CD4-positive, alpha-beta T cell (primary cell): ENCODE measurements at regions of chr1 and their contacts with region 1.

Region 1: GRCh38 chr1:234963180-234963903 is 165.3 kb downstream of the TOMM20 start:
- DNase-seq: peak; percentile 59 to 97 (median 78)
- ATAC-seq: peak; percentile 79
- H3K4me3 ChIP-seq: peak overlapping the region; percentile 25
- H3K4me3 Mint-ChIP-seq: peak overlapping the region; percentile 78
- H3K27ac ChIP-seq: peak overlapping the region; percentile 71 to 81
- H3K27ac Mint-ChIP-seq: peak overlapping the region; percentile 90
- H3K4me1 ChIP-seq: peaks cover 63% of the 10 kb centered on the region
- H3K4me1 Mint-ChIP-seq: peaks cover 66% of the 10 kb centered on the region
- H3K27me3 ChIP-seq: no peaks in the 10 kb centered on the region
- H3K27me3 Mint-ChIP-seq: no peaks in the 10 kb centered on the region
- CTCF ChIP-seq: no peak

Region 2: DNA sequence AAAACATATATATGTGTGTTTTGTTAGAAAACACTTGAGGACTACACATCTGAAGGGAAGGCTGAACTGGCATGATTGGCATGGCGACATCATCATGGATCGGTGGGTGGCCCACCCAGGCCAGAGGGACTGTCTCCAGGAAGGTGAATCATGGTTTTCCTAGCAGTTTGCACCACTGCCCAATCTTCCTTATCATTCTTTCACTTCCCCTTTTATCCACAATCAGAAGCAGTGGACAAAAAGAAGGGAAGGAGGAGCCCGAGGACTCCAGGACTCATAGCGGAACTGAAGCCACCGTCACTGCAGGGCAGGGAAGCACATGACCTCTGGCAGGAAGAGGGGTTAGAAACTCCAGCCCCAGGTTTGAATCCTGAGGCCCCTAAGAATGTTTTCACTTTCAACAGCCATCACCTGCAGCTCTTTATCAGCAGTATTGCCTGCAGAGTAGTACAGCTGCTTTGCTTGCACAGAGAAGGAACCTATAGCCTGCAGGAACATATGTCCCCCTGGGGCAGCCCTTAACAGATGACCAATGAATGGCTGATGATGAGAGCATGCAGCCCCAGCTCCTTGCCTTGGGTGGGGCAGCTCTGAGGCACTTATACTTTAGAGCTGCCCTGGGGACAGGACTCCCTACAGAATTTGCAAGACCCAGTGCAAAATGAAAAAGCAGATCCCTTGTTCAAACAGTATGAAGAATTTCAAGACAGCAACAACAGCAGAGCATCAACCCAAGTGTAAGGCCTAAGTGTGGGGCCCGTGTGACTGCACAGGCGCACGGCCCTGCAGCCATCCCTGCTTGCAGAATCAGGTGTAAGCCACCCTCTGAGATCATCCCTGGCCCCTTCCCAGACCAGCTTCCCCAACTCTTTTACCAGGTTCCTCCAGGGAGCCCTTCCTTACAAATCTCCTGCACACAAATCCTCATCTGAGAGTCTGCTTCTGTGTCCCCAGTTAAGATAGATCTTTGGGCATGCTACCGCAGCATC is 111.6 kb before region 1 on chr1:
- CTCF ChIA-PET with region 1: no interaction called
- POLR2A ChIA-PET with region 1: no interaction called
- intact Hi-C with region 1: loop called in 1 of 2 experiments (anchors 5 kb)
- DNase-seq: peak in 3 of 14 experiments; percentile 15 to 58 (median 56)
- ATAC-seq: no peak
- H3K4me3 ChIP-seq: no peak overlapping the region
- H3K4me3 Mint-ChIP-seq: no peak overlapping the region
- H3K27ac ChIP-seq: no peak overlapping the region
- H3K27ac Mint-ChIP-seq: no peak overlapping the region
- H3K4me1 ChIP-seq: peaks cover 24% of the 10 kb centered on the region
- H3K4me1 Mint-ChIP-seq: peaks cover 33% of the 10 kb centered on the region
- H3K27me3 ChIP-seq: no peaks in the 10 kb centered on the region
- H3K27me3 Mint-ChIP-seq: no peaks in the 10 kb centered on the region
- CTCF ChIP-seq: no peak

Region 3: DNA sequence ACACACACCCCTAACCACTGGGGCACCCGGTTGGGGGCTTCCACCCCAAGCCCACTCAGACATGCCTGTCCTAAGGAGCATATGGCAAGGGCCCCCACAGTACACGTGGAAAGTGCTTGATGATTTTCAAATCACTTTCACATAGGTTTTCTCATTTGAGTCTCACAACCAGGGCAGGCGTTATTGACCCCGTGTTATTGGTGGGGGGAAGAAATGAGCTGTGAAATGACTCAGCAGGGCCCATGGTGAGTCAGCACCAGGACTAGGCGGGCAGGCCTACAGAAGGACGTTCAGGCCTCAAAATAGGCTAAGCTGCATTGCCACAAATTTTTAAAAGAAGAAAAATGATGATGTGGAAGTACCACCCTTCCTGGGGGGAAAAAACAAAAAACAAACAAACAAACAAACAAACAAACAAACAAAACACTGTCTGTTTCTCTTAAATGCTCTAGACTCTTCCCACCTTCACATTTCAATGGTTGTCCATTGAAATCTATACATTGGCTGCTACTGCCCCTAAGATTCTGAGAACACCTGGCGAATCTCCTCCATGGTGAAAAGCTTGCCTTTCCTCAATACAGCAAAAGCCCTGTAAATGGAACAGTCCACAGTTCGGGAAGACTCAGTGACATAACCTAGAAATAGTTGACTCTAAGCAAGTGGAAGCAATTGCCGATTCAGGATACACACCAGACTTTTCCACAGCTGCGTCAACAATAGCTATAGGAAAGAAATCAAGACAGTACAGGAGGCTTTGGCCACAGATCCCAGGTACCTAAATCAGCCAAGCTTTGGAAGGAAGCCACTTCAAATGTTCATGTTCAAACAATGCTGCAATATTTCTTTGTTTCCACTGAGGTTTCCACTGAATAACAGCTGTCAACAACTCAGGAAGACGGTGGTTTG is 69.4 kb before region 1 on chr1:
- CTCF ChIA-PET with region 1: no interaction called
- POLR2A ChIA-PET with region 1: no interaction called
- intact Hi-C with region 1: no loop called
- DNase-seq: peak in 2 of 14 experiments; percentile 17 to 39
- ATAC-seq: no peak
- H3K4me3 ChIP-seq: no peak overlapping the region
- H3K4me3 Mint-ChIP-seq: no peak overlapping the region
- H3K27ac ChIP-seq: no peak overlapping the region
- H3K27ac Mint-ChIP-seq: no peak overlapping the region
- H3K4me1 ChIP-seq: peaks cover 11% of the 10 kb centered on the region
- H3K4me1 Mint-ChIP-seq: peaks cover 20% of the 10 kb centered on the region
- H3K27me3 ChIP-seq: no peaks in the 10 kb centered on the region
- H3K27me3 Mint-ChIP-seq: no peaks in the 10 kb centered on the region
- CTCF ChIP-seq: no peak